ENCODE measurements at regions of chr6 and their contacts with region 1.

Region 1: DNA sequence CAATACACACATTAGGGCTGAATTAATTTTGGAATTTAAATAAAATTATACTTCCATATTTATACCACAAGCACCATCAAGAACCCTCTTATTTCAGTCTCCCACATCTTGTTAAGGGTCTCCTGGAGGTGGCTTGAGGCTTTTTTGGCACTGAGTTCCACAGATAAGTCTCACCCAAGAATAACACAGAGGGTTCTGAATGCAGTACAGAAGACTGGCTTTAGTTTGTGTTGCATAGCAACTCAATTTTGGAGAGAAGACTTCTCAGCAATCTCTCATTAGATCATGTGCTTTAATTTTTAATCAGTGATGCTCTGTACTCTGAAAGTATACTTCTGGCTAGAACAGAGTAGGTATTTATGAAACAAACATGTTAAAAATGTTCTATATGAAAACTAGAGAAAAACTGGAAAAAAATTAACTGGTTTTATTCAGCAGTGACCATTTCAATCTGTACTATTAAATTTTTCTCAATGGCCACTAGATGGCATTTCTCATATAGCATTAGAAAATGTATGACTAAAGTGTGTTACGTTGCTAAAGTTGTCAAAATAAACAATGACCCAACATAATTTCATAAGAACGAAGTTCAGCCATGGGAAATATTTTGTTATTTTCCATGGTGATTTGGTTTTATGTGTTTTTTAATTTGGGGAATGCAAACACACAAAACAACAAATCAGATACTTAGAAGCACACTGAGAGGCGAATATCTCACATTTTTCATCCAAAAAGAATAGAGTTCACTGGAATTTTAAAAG is 32.7 kb upstream of the MAP7 start:
- DNase-seq: no peak
- H3K4me3 ChIP-seq: no peak overlapping the region
- H3K27ac ChIP-seq: peak overlapping the region; percentile 51 to 64
- H3K4me1 ChIP-seq: peaks cover 8% of the 10 kb centered on the region
- H3K27me3 ChIP-seq: no peaks in the 10 kb centered on the region
- CTCF ChIP-seq: peak; percentile 22 to 70 (median 60)
- EP300 ChIP-seq: no peak
- POLR2A ChIP-seq: no peak

Region 2: DNA sequence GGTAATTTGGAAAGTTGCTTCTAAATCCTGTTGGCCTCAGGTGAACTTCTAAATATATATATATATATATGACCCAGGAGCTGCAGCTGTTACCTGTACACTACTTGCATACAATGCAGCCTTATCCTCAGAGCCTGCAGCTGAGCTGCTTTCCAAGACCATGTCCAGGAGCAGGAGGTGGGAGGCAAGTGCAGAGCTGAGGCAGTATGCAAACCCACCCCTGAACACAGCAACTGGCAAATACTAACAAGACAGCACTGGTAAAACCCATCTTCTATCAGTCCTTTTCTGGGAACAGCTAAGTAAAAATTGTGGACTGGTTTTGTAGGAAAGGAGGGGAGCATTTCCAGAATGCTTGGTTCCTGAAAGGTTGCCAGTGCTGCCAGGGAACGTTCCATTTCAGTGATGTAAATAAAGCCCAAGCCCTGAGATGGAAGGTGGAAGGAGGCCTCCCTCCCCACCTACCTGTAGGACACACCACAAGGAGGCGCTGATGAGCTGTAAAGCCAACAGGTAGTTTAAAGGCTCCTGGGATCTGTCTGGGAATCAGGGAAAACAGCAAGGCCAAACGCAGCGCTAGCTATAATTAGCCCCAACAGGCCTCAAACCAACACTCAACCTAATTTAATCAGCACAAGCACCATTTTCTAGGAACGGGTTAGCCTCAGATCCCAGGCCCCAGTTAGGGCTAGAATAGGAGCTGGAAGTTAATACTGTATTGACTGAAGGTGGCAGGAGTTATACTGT is 61.1 kb after region 1 on chr6:
- intact Hi-C with region 1: loop called in 2 of 4 experiments (anchors 10 kb)
- DNase-seq: peak; percentile 92 to 98 (median 95)
- H3K4me3 ChIP-seq: no peak overlapping the region
- H3K27ac ChIP-seq: peak overlapping the region; percentile 49 to 55
- H3K4me1 ChIP-seq: peaks cover 14% of the 10 kb centered on the region
- H3K27me3 ChIP-seq: no peaks in the 10 kb centered on the region
- CTCF ChIP-seq: peak; percentile 79 to 93 (median 82)
- EP300 ChIP-seq: no peak
- POLR2A ChIP-seq: no peak

Measured in ovary (tissue), 10 donors.